ENCODE measurements at regions of chr3 and their contacts with region 1.

Region 1: DNA sequence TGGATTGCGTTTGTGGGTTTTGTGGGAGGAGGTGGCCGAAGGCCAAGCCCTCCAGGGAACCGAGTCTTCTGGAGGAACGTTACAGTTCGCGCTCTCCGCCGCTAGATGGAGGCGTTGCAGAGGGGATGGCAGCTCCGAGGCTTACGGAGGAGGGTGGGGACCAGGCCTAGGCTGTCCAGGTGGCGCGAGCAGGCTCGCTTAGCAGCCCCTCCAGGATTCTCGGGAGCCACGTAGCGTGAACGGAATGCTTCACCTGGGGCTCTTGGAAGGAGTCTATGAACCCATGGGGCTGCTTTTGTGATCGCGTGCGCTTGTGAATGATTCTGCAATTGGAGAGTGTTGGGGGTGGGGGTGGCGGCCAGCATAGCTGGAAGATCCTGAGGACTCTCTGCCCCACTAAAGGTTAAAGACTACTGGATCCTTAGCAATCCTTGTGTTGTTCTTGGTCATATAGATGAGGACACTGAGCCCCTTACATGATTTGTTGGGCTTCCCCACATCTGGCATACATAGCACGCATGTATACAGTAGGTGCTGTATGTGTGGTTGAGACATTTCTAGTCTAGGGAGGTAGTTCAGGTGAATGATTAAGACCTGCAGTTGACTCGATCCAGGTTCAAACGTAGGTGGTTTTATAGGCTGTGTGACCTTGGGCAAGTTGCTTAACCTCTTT is 25.7 kb downstream of the FAM3D start:
- DNase-seq: no peak
- ATAC-seq: peak; percentile 97
- H3K4me3 ChIP-seq: no peak overlapping the region
- H3K27ac ChIP-seq: no peak overlapping the region
- H3K4me1 ChIP-seq: no peaks in the 10 kb centered on the region
- H3K27me3 ChIP-seq: no peaks in the 10 kb centered on the region
- CTCF ChIP-seq: peak; percentile 82 to 97 (median 94); a peak in 5 of 6 replicates
- EP300 ChIP-seq: no peak
- POLR2A ChIP-seq: no peak
- RAD21 ChIP-seq: peak; percentile 94

Region 2: DNA sequence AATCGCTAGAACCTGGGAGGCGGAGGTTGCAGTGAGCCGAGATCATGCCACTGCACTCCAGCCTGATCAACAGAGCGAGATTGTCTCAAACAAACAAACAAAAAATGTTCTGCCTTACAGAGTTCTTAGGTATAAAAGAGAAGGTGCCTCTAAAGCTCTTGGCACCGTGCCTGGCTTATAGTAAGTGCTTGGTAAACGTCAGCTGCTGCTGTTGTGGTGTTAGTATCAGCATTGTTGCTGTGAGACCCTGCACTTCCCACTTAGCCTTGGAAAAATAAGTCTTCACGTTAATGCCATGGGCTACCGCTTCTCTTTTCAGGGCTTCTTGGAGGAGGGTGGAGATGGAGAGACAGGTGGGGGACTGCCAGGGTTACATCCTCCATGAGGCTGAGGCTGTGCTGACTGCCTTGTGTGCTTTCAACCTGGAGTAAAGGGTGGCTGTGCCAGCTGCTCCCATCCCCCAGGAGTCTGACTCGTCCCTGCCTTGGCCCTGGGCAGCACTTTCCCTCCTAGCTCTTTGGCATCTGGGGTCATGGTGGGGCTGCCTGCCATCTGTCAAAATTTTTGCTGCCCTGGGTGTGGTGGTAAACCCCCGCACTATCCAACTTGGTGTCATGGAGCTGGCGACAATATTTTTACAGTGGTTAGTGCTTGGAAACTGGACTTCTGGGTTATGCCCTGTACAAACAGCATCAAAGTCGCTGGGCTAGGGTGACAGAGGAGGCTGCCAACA is 614.8 kb before region 1 on chr3:
- CTCF ChIA-PET with region 1: no interaction called
- POLR2A ChIA-PET with region 1: no interaction called
- RAD21 ChIA-PET with region 1: no interaction called
- SMC1A ChIA-PET with region 1: no interaction called
- in situ Hi-C with region 1: no loop called
- intact Hi-C with region 1: no loop called
- DNase-seq: no peak
- ATAC-seq: no peak
- H3K4me3 ChIP-seq: no peak overlapping the region
- H3K27ac ChIP-seq: no peak overlapping the region
- H3K4me1 ChIP-seq: peaks cover 13% of the 10 kb centered on the region
- H3K27me3 ChIP-seq: no peaks in the 10 kb centered on the region
- CTCF ChIP-seq: no peak
- EP300 ChIP-seq: no peak
- POLR2A ChIP-seq: no peak
- RAD21 ChIP-seq: no peak

Region 3: DNA sequence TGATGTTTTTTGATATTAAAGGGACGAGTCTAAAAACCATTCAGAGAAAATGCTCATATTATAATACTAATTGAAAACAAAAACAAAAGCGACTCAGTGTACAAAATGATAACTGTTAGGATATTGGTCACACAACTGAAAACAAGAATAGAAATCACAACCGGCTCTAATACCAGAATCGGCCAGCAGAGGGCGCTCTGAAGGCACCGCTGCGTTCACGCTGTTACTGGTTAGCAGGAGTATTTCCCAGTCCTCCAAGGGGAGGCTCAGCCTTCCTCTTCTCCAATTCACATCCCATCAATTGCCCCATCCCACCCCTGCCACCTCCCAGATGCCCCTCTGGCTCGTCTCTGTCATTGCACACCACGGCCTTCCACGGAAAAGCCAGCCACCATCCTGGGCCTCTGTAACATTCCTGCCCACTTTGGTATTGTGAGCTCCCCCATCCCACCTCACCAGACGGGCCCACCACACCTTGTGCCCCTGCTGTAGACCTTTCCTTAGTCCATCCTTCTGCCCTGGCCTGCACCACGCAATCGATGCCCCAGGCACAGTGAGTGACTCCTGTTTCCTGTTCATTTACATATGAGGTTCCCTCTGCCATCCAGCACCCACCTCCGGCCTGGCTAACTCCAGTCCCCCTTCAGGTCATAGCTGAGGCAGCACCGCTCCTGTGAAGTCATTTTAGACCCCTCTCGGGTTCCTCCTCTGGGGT is 72.1 kb before region 1 on chr3:
- CTCF ChIA-PET with region 1: interaction called, 11 read pairs
- POLR2A ChIA-PET with region 1: no interaction called
- RAD21 ChIA-PET with region 1: interaction called, 3 read pairs
- SMC1A ChIA-PET with region 1: no interaction called
- in situ Hi-C with region 1: no loop called
- intact Hi-C with region 1: no loop called
- DNase-seq: peak; percentile 19
- ATAC-seq: peak; percentile 86
- H3K4me3 ChIP-seq: no peak overlapping the region
- H3K27ac ChIP-seq: no peak overlapping the region
- H3K4me1 ChIP-seq: 0 out of 2 replicates have a peak, but pooled peaks cover 3% of the 10 kb centered on the region
- H3K27me3 ChIP-seq: no peaks in the 10 kb centered on the region; a peak in 1 of 4 replicates
- CTCF ChIP-seq: peak; percentile 83 to 86 (median 84)
- EP300 ChIP-seq: no peak
- POLR2A ChIP-seq: no peak
- RAD21 ChIP-seq: peak; percentile 75

Region 4: DNA sequence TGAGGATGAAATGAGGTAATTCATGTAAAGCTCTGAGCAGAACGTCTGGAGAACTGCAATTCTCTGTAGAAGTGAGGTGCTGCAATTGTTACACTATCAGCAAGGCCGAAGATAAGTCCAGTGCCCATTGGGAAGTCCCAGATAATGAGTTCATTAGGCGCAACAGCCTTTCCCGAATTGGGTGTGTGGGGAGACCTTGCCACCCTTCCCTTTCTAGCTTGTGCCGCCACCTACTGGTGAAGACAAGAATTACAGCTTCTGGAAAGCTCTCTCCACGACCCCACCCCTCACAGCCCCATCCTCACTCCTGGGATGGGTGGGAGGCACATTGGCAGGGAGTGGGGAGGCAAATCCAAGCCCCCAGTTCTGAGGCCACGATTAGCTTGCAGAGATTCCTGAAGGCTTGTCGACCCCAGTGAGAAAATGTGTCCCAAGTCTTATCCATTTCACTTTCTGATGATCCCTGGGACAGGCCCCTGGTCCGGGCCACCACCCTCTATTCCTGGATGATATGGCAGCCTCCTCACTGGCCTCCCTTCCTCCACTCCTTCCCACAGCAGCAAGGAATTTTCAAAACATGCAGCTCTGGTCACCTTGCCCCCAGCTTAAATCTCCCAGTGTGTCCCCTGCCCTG is 10.6 kb before region 1 on chr3:
- CTCF ChIA-PET with region 1: interaction called, 31 read pairs
- POLR2A ChIA-PET with region 1: no interaction called
- RAD21 ChIA-PET with region 1: interaction called, 6 read pairs
- SMC1A ChIA-PET with region 1: interaction called, 4 read pairs
- in situ Hi-C with region 1: no loop called
- intact Hi-C with region 1: no loop called
- DNase-seq: no peak
- ATAC-seq: peak; percentile 87
- H3K4me3 ChIP-seq: no peak overlapping the region
- H3K27ac ChIP-seq: no peak overlapping the region
- H3K4me1 ChIP-seq: no peaks in the 10 kb centered on the region
- H3K27me3 ChIP-seq: peaks cover 2 to 3% of the 10 kb centered on the region in 2 experiments; a peak in 1 of 4 replicates
- CTCF ChIP-seq: peak; percentile 87 to 89 (median 88)
- EP300 ChIP-seq: no peak
- POLR2A ChIP-seq: no peak
- RAD21 ChIP-seq: peak; percentile 83

Region 5: GRCh38 chr3:58731673-58732072 is 90.8 kb after region 1 on chr3:
- CTCF ChIA-PET with region 1: interaction called, 5 read pairs
- POLR2A ChIA-PET with region 1: no interaction called
- RAD21 ChIA-PET with region 1: no interaction called
- SMC1A ChIA-PET with region 1: interaction called, 4 read pairs
- in situ Hi-C with region 1: no loop called
- intact Hi-C with region 1: loop called (anchors 5 kb)
- DNase-seq: no peak
- ATAC-seq: no peak
- H3K4me3 ChIP-seq: no peak overlapping the region
- H3K27ac ChIP-seq: no peak overlapping the region
- H3K4me1 ChIP-seq: no peaks in the 10 kb centered on the region
- H3K27me3 ChIP-seq: no peaks in the 10 kb centered on the region
- CTCF ChIP-seq: no peak; a peak in 1 of 6 replicates
- EP300 ChIP-seq: no peak
- POLR2A ChIP-seq: no peak
- RAD21 ChIP-seq: no peak

Region 6: GRCh38 chr3:58848826-58849225 is 208.0 kb after region 1 on chr3:
- CTCF ChIA-PET with region 1: no interaction called
- POLR2A ChIA-PET with region 1: no interaction called
- RAD21 ChIA-PET with region 1: no interaction called
- SMC1A ChIA-PET with region 1: no interaction called
- in situ Hi-C with region 1: no loop called
- intact Hi-C with region 1: no loop called
- DNase-seq: no peak
- ATAC-seq: no peak
- H3K4me3 ChIP-seq: no peak overlapping the region
- H3K27ac ChIP-seq: no peak overlapping the region
- H3K4me1 ChIP-seq: no peaks in the 10 kb centered on the region
- H3K27me3 ChIP-seq: no peaks in the 10 kb centered on the region
- CTCF ChIP-seq: no peak
- EP300 ChIP-seq: no peak
- POLR2A ChIP-seq: no peak
- RAD21 ChIP-seq: no peak

Region 7: DNA sequence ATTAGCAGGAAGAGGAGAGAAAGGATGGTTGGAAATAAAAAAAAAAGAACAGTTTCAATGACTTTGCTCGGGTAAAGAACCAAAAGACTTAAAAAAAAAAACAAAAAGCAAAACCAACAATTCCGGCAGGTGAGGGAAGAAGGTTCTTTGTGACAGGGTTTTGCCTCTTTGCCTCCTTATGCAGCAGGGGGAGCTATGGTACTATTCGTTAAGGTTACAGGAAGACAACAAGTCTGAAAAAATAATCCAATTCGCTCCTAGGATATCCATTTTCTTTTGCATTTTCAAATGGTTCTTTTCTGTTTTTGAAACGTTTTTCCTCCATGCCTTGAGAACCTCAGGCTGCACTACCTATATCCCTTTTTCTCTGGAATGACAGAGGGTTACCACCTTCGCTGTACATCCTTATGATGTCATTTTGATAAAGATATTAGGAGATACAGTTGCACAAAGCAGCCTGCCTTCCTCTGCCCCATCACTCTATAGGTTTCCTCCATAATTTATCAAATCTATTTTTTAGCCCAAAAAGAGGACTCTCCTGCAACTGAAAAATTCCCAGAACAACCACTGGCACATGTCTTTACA is 354.0 kb after region 1 on chr3:
- CTCF ChIA-PET with region 1: no interaction called
- POLR2A ChIA-PET with region 1: no interaction called
- RAD21 ChIA-PET with region 1: interaction called, 3 read pairs
- SMC1A ChIA-PET with region 1: no interaction called
- in situ Hi-C with region 1: no loop called
- intact Hi-C with region 1: loop called (anchors 2 kb)
- DNase-seq: peak; percentile 23
- ATAC-seq: peak; percentile 86
- H3K4me3 ChIP-seq: no peak overlapping the region
- H3K27ac ChIP-seq: no peak overlapping the region
- H3K4me1 ChIP-seq: no peaks in the 10 kb centered on the region
- H3K27me3 ChIP-seq: no peaks in the 10 kb centered on the region
- CTCF ChIP-seq: peak; percentile 65 to 75 (median 72)
- EP300 ChIP-seq: no peak
- POLR2A ChIP-seq: no peak
- RAD21 ChIP-seq: peak; percentile 73